ENCODE measurements at regions of chr17 and their contacts with region 1.

Region 1: DNA sequence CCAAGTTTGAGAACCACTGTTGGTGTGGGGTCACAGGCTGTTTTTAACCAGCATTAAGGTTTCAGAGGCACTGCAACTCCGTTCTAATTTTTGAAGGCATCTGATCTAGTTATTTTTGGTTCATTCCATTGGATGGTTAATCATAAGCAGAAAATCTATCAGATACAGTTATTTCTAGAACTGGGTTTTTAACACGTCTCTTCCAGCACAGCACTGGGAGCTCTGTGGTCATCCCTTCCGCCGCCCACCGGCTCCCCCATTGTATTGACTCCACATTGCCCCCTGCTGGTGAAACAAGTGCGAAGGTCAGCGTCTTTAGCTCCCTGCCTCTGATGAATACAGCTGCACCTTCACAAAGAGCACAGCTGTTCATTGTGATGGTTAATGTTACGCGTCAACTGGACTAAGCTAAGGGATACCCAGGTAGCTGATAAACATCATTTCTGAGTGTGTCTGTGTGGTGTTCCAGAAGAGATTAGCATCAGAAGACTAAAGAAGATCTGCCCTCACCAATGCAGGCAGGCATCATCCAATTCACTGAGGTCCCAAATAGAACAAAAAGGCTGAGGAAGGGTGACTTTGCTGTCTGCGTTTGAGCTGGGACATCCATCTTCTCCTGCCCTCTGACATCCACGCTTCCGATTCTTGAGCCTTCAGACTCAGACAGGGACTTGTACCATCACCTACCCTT is 8.5 kb downstream of the CCL18 start:
- DNase-seq: peak; percentile 69
- ATAC-seq: peak; percentile 90
- H3K4me3 ChIP-seq: no peak overlapping the region
- H3K27ac ChIP-seq: no peak overlapping the region
- H3K4me1 ChIP-seq: peaks cover 11% of the 10 kb centered on the region
- H3K27me3 ChIP-seq: no peaks in the 10 kb centered on the region
- CTCF ChIP-seq: peak; percentile 69 to 82 (median 81)
- EP300 ChIP-seq: peak; percentile 82 to 94; a peak in 3 of 4 replicates
- POLR2A ChIP-seq: no peak
- RAD21 ChIP-seq: peak; percentile 73

Region 2: GRCh38 chr17:35653619-35654361 is 418.8 kb before region 1 on chr17:
- CTCF ChIA-PET with region 1: no interaction called
- POLR2A ChIA-PET with region 1: no interaction called
- RAD21 ChIA-PET with region 1: no interaction called
- SMC1A ChIA-PET with region 1: no interaction called
- in situ Hi-C with region 1: no loop called
- intact Hi-C with region 1: no loop called
- DNase-seq: no peak
- ATAC-seq: no peak
- H3K4me3 ChIP-seq: no peak overlapping the region
- H3K27ac ChIP-seq: no peak overlapping the region
- H3K4me1 ChIP-seq: no peaks in the 10 kb centered on the region
- H3K27me3 ChIP-seq: no peaks in the 10 kb centered on the region
- CTCF ChIP-seq: no peak
- EP300 ChIP-seq: no peak
- POLR2A ChIP-seq: no peak
- RAD21 ChIP-seq: no peak

Region 3: DNA sequence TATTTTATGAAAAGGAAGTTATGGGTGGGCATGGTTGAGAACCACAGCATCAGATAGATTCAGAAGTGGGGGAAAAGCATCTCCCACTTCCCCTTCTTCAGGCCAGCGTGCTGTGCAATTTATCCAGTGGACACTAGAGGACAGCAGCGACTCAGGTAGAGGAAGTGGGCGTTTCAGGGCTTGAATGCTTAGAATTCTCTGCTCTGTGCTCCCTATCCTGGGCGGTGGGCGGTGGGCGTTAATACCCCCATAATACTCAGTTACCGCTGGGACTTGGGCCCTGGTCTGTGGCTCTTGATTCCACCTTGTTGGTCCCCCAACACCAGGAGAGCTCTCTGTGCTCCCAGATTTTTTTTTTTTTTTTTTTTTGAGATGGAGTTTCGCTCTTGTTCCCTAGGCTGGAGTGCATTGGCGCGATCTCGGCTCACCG is 125.4 kb before region 1 on chr17:
- CTCF ChIA-PET with region 1: interaction called, 12 read pairs
- POLR2A ChIA-PET with region 1: no interaction called
- RAD21 ChIA-PET with region 1: no interaction called
- SMC1A ChIA-PET with region 1: interaction called, 4 read pairs
- in situ Hi-C with region 1: no loop called
- intact Hi-C with region 1: no loop called
- DNase-seq: no peak
- ATAC-seq: peak; percentile 98
- H3K4me3 ChIP-seq: no peak overlapping the region
- H3K27ac ChIP-seq: no peak overlapping the region
- H3K4me1 ChIP-seq: no peaks in the 10 kb centered on the region
- H3K27me3 ChIP-seq: no peaks in the 10 kb centered on the region; a peak in 1 of 4 replicates
- CTCF ChIP-seq: peak; percentile 84 to 97 (median 96)
- EP300 ChIP-seq: no peak
- POLR2A ChIP-seq: no peak
- RAD21 ChIP-seq: peak; percentile 89

Region 4: DNA sequence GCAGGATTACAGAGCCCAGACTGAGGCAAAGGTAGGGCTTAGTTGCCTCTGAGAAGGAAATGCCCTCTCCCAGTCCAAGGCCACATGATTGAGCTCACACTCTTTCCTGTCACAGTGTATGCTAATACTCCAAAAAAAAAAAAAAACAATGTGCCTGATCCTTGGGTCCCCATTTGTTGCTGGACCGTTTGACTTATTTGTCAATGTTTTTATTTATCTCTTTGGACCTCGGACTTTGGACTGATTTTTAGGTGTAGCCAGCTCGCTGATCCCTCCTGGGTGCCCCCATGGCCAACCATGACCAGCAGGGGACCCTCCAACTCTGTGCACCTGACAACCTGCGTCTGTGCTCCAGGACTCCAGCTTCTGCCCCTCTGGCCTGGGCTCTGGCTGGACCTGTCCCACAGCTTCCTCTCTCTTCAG is 90.7 kb before region 1 on chr17:
- CTCF ChIA-PET with region 1: interaction called, 392 read pairs
- POLR2A ChIA-PET with region 1: interaction called, 5 read pairs
- RAD21 ChIA-PET with region 1: interaction called, 45 read pairs
- SMC1A ChIA-PET with region 1: interaction called, 341 read pairs
- in situ Hi-C with region 1: no loop called
- intact Hi-C with region 1: loop called (anchors 2 kb)
- DNase-seq: no peak
- ATAC-seq: peak; percentile 49
- H3K4me3 ChIP-seq: no peak overlapping the region
- H3K27ac ChIP-seq: no peak overlapping the region
- H3K4me1 ChIP-seq: peaks cover 6% of the 10 kb centered on the region; the same call in 1 of the 2 replicates
- H3K27me3 ChIP-seq: no peaks in the 10 kb centered on the region
- CTCF ChIP-seq: peak; percentile 36 to 46 (median 39); a peak in 5 of 6 replicates
- EP300 ChIP-seq: no peak
- POLR2A ChIP-seq: no peak
- RAD21 ChIP-seq: peak; percentile 71

Region 5: GRCh38 chr17:36034127-36034526 is 38.4 kb before region 1 on chr17:
- CTCF ChIA-PET with region 1: interaction called, 12 read pairs
- POLR2A ChIA-PET with region 1: interaction called, 4 read pairs
- RAD21 ChIA-PET with region 1: interaction called, 6 read pairs
- SMC1A ChIA-PET with region 1: interaction called, 18 read pairs
- in situ Hi-C with region 1: no loop called
- intact Hi-C with region 1: no loop called
- DNase-seq: peak; percentile 62
- ATAC-seq: peak; percentile 94
- H3K4me3 ChIP-seq: no peak overlapping the region
- H3K27ac ChIP-seq: no peak overlapping the region
- H3K4me1 ChIP-seq: peaks cover 5% of the 10 kb centered on the region; the same call in 1 of the 2 replicates
- H3K27me3 ChIP-seq: no peaks in the 10 kb centered on the region
- CTCF ChIP-seq: no peak
- EP300 ChIP-seq: peak; percentile 87 to 96
- POLR2A ChIP-seq: no peak
- RAD21 ChIP-seq: no peak

Region 6: DNA sequence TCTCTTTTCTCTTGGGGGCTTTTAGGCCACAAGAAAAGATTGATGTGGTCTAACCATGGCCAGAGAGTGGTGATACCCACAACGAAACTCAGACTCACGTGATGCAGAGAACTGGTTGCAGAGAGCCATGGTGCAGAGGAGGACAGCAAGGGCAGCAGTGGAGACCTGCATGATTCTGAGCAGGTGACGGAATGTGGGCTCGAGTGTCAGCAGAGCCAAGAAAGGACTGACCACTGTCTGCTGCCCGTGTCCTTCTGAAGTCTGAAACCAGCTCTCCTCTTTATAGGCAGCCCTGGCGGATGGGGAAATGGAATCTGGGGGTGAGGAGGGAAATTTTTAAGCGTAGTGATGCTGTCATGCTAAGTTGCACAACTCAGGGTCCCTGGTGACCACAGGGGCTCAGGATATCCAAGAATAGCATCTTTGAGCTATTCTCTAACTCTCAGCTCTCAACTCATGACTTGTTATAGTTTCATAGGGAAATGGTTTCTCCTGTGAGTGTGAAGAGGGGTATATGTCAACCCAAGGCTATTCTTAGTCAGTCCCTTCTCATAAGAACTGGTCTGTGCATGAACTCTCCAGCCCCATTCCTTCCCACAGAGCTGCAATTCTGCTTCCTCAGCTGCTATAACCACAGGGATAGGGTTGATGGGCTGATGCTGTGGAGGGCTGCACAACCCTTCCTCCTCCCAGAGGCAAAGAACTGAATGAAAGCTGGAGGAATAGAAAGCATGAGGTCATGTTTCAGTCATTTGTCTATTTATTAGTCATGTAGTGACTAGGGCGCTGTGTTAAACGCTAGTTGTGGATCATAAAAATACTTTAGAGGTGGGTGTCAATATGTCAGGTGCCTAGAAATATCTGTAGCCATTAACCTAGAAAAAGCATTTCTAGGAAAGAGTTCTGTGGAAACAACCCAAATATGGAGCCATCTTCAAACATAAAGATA is 17.6 kb after region 1 on chr17 and contains the start of gene CCL3:
- CTCF ChIA-PET with region 1: interaction called, 61 read pairs
- POLR2A ChIA-PET with region 1: interaction called, 14 read pairs
- RAD21 ChIA-PET with region 1: interaction called, 75 read pairs
- SMC1A ChIA-PET with region 1: interaction called, 48 read pairs
- in situ Hi-C with region 1: no loop called
- intact Hi-C with region 1: loop called (anchors 1 kb)
- DNase-seq: peak; percentile 99
- ATAC-seq: peak; percentile 70
- H3K4me3 ChIP-seq: peak within 1 kb of the TSS; percentile 64
- H3K27ac ChIP-seq: peak within 1 kb of the TSS; percentile 87
- H3K4me1 ChIP-seq: peaks cover 50% of the 10 kb centered on the region
- H3K27me3 ChIP-seq: no peaks in the 10 kb centered on the region
- CTCF ChIP-seq: no peak
- EP300 ChIP-seq: peak; percentile 91 to 96
- POLR2A ChIP-seq: peak; percentile 92
- RAD21 ChIP-seq: no peak
- polyA plus RNA-seq, gene CCL3: 240 to 318 TPM

Region 7: GRCh38 chr17:36117505-36118382 is 45.2 kb after region 1 on chr17:
- CTCF ChIA-PET with region 1: interaction called, 3 read pairs
- POLR2A ChIA-PET with region 1: no interaction called
- RAD21 ChIA-PET with region 1: interaction called, 11 read pairs
- SMC1A ChIA-PET with region 1: interaction called, 6 read pairs
- in situ Hi-C with region 1: no loop called
- intact Hi-C with region 1: no loop called
- DNase-seq: no peak
- ATAC-seq: peak; percentile 89
- H3K4me3 ChIP-seq: no peak overlapping the region
- H3K27ac ChIP-seq: no peak overlapping the region
- H3K4me1 ChIP-seq: peaks cover 18% of the 10 kb centered on the region
- H3K27me3 ChIP-seq: no peaks in the 10 kb centered on the region
- CTCF ChIP-seq: no peak
- EP300 ChIP-seq: no peak; a peak in 1 of 4 replicates
- POLR2A ChIP-seq: no peak
- RAD21 ChIP-seq: no peak

Measured in GM12878 (cell line).